Heart right ventricle (tissue), 16 donors: ENCODE measurements at regions of chr7 and their contacts with region 1.

Region 1: GRCh38 chr7:45524445-45524844 is 49.7 kb upstream of the ADCY1 start:
- DNase-seq: peak in 1 of 2 donors; percentile 42
- ATAC-seq: peak in 7 of 8 donors; percentile 51 to 90 (median 88)
- H3K4me3 ChIP-seq: no peak overlapping the region
- H3K27ac ChIP-seq: peak overlapping the region in 3 of 10 donors; percentile 32 to 43 (median 41)
- H3K4me1 ChIP-seq: peaks cover 0 to 5% (median 0%) of the 10 kb centered on the region in 9 donors
- H3K27me3 ChIP-seq: peaks cover 0 to 1% (median 0%) of the 10 kb centered on the region in 7 donors
- CTCF ChIP-seq: no peak

Region 2: GRCh38 chr7:45626441-45627430 is 102.3 kb after region 1 on chr7:
- intact Hi-C with region 1: no loop called
- DNase-seq: no peak
- ATAC-seq: peak in 1 of 8 donors; percentile 43
- H3K4me3 ChIP-seq: no peak overlapping the region
- H3K27ac ChIP-seq: no peak overlapping the region
- H3K4me1 ChIP-seq: no peaks in the 10 kb centered on the region
- H3K27me3 ChIP-seq: no peaks in the 10 kb centered on the region
- CTCF ChIP-seq: no peak

Region 3: GRCh38 chr7:47453093-47454049 is 1928.9 kb after region 1 on chr7:
- intact Hi-C with region 1: loop called in 1 of 10 experiments (anchors 5 kb)
- DNase-seq: peak; percentile 43 to 58
- ATAC-seq: peak; percentile 62 to 84 (median 76)
- H3K4me3 ChIP-seq: peak overlapping the region in 9 of 10 donors; percentile 1 to 44 (median 38)
- H3K27ac ChIP-seq: peak overlapping the region; percentile 36 to 90 (median 84)
- H3K4me1 ChIP-seq: peaks cover 14 to 62% (median 37%) of the 10 kb centered on the region in 9 donors
- H3K27me3 ChIP-seq: no peaks in the 10 kb centered on the region
- CTCF ChIP-seq: no peak